Dorsolateral prefrontal cortex (tissue), 120 donors: ENCODE measurements at regions of chr10 and their contacts with region 1.

Region 1: DNA sequence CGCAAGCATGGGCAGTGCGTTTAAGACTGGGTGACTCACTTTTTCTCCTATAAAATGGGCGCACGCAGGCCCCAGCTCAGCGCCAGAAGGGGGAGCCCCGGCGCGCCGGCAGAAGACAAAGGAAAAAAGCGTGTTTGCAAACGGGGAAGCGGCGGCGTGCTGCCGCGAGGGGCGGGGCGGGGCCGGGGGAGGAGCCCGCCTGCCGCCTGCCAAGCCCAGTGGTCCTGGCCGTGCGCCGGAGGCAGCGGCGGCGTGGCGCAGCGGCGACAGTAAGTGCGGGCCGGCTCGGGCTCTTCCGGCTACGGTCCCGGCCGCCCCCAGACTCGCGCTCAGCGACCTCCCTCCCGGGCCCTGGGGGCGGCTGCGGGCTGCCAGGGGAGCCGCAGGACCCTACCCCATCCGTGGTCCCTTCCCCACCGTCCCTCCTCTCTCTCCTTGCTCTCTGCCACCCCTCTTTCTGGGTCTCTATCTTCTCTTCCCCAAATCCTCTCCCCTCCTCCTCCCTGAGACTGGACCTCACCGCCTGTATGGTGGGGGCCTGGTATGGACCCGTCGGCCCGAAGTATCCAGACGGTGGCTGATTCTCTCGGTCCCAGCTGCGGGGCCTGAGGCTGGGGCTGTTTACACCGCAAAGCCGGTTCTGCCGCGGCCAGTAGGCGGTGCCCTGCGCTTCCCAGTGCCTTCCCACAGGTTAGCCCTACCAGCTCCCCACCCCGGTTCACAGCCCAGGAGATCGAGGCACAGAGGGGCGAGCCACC is at the start of gene SLC29A3:
- DNase-seq: peak; percentile 74 to 87 (median 80)
- H3K4me3 ChIP-seq: peak within 1 kb of the TSS; percentile 61 to 97 (median 81)
- H3K27ac ChIP-seq: peak within 1 kb of the TSS; percentile 50 to 94 (median 86)
- H3K27me3 ChIP-seq: no peaks in the 10 kb centered on the region
- CTCF ChIP-seq: peak; percentile 40 to 77 (median 62)
- total RNA-seq, gene SLC29A3: 5.1 to 15.4 (median 9.2) TPM

Region 2: GRCh38 chr10:71293446-71294084 is 25.7 kb before region 1 on chr10:
- intact Hi-C with region 1: no loop called
- DNase-seq: peak in 5 of 10 donors; percentile 33 to 71 (median 54)
- H3K4me3 ChIP-seq: no peak overlapping the region
- H3K27ac ChIP-seq: peak overlapping the region in 18 of 59 donors; percentile 9 to 73 (median 46)
- H3K27me3 ChIP-seq: no peaks in the 10 kb centered on the region
- CTCF ChIP-seq: no peak

Region 3: DNA sequence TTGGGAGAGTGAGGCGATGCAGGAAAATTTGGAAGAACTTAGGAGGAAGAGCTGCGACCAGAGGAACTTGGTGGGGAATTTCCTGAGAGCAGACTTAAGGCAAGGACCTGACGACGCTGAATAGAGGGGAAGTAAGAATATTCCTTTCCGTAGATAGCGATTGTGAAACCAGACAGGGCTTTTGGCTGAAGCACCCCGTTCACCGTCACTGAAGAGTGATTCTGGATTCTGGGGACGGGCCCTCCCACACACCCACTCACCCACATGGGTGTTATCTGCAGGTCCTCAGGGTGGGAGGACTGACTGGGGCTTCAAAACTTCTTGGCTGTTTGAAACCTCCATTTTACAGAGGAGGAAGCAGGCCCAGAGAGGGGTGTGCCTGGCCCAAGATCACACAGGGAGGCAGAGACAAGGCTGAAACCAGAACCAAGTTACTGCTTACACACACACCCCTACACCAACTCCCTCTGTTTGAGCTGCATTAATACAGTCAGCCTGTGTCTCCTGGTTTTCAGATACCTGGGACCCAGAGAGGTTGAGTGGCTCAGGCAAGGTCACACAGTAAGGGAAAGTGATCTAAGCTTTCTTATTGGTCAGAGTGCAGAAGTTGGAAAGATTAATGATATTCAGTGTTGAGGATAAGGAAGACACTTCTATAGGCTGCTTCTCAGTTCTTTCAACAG is 40.3 kb after region 1 on chr10:
- intact Hi-C with region 1: no loop called
- DNase-seq: no peak
- H3K4me3 ChIP-seq: no peak overlapping the region
- H3K27ac ChIP-seq: peak overlapping the region in 15 of 59 donors; percentile 2 to 73 (median 37)
- H3K27me3 ChIP-seq: no peaks in the 10 kb centered on the region
- CTCF ChIP-seq: no peak

Region 4: DNA sequence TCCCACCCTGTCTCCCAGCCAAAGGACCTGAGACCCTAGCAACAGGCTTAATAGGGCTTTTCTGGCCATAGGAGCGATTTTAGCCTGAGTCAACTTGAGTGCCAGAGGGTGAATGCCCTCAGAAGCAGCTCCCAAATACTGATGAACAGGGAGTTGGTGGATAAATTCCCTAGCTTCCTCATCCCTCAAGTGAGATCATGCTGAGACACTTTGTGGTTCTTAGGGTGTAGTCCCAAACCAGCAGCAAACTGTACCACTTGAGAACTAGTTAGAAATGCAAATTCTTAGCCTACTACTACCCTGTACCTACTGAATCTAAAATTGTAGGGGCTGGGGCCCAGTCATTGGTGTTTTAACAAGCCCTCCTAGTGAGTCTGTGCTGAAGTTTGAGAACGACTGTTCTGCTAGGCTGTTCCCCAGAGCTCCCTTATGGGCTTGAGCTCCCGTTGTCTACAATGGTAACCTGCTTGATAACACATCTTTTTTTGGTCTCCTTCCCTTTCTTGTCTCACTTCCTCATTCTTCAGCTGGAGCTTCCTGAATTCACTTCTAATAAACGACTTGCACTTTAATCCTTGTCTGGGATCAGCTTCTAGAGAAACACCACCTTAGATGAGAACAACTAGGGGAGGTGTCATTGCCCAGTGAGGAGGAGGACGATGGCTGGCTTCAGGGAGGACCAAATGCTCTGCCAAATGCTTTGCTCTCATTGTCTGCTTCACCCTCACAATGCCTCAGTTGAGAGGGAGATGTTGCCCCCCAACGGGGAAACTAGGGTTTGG is 59.3 kb after region 1 on chr10:
- intact Hi-C with region 1: loop called (anchors 1 to 5 kb)
- DNase-seq: no peak
- H3K4me3 ChIP-seq: no peak overlapping the region
- H3K27ac ChIP-seq: peak overlapping the region in 49 of 59 donors; percentile 5 to 99 (median 79)
- H3K27me3 ChIP-seq: no peaks in the 10 kb centered on the region
- CTCF ChIP-seq: no peak

Region 5: GRCh38 chr10:71608819-71609768 is 289.9 kb after region 1 on chr10:
- intact Hi-C with region 1: loop called in 1 of 2 experiments (anchors 5 kb)
- DNase-seq: peak; percentile 82 to 94 (median 86)
- H3K4me3 ChIP-seq: peak overlapping the region in 1 of 59 donors; percentile 0
- H3K27ac ChIP-seq: peak overlapping the region in 5 of 59 donors; percentile 3 to 75 (median 32)
- H3K27me3 ChIP-seq: no peaks in the 10 kb centered on the region
- CTCF ChIP-seq: peak; percentile 57 to 90 (median 82)

Region 6: DNA sequence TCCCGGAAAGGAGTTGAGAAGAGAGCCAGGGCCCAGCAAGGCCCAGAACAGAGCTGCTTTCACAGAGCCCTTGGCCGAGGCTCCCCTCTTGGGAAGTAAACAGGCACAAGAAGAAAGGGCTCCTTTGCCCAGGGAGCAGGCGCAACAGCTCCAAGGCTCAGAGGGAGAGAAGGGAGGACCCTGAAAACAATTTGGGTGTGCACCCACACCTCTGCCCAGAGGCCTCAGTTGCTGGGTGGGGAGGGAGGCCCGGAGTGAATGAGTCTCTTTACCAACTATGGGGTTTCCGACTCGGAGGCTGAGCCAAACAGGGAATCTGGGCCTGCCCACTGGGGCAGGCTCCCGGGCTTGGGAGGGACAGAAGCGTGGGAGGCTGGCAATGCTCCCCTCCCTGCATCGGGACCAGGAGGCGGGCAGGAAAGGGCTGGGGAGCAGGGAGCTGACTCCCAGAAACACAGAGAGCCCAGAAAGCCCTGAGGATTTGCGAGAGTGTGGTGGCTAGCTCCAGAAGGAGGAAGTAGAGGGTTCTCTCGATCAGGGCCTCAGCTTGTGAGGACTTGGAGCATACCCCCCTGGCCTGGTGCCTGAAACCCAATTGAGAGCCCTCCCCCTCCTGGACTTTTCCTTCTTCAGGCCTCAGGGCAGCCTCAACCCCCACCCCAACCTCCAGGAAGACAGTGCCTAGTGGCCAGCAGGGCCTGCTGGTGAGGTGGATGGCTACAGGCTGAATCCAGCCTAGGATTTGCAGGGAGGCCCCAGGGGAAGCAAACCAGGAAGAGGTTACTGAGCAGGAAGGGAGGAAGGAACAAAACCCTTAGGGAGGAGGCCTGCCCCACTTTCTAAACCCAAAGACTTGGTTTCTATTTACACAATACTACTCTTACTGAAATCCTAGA is 394.2 kb after region 1 on chr10:
- intact Hi-C with region 1: loop called (anchors 2 to 5 kb)
- DNase-seq: peak; percentile 52 to 86 (median 84)
- H3K4me3 ChIP-seq: peak overlapping the region in 7 of 59 donors; percentile 1 to 36 (median 10)
- H3K27ac ChIP-seq: peak overlapping the region; percentile 87 to 99 (median 97)
- H3K27me3 ChIP-seq: no peaks in the 10 kb centered on the region
- CTCF ChIP-seq: peak in 14 of 56 donors; percentile 5 to 49 (median 18)

Region 7: GRCh38 chr10:72048450-72049124 is 729.4 kb after region 1 on chr10:
- intact Hi-C with region 1: loop called (anchors 10 kb)
- DNase-seq: peak; percentile 91 to 97 (median 94)
- H3K4me3 ChIP-seq: no peak overlapping the region
- H3K27ac ChIP-seq: peak overlapping the region in 44 of 59 donors; percentile 1 to 98 (median 45)
- H3K27me3 ChIP-seq: no peaks in the 10 kb centered on the region
- CTCF ChIP-seq: peak; percentile 98 to 100 (median 100)

Region 8: GRCh38 chr10:72331601-72332422 is 1012.6 kb after region 1 on chr10:
- intact Hi-C with region 1: loop called in 1 of 2 experiments (anchors 10 kb)
- DNase-seq: peak; percentile 74 to 95 (median 92)
- H3K4me3 ChIP-seq: peak overlapping the region in 25 of 59 donors; percentile 0 to 39 (median 18)
- H3K27ac ChIP-seq: peak overlapping the region; percentile 76 to 99 (median 95)
- H3K27me3 ChIP-seq: no peaks in the 10 kb centered on the region
- CTCF ChIP-seq: peak in 45 of 56 donors; percentile 15 to 67 (median 42)